Psoas muscle (tissue), 8 donors: ENCODE measurements at regions of chr6 and their contacts with region 1.

Region 1: DNA sequence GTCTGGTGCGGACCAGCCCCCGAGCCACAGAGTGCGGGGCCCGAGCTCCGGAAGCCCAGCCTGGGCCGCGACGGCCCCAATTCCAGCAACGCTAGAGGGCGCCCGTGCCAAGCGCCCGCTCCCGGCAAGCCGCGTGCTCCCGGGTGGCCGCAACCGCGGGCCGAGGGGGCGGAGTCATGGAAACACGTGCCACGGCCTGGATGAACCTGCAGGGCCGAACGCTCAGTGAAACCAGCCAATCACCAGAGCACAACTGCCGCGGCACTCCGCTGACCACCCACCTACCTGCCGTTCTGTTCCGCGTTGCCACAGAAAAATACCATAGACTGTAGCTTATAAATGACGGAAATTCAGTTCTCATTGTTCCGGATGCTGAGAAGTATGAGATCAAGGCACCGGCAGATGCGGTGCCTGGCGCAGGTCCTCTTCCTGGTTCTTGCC is 85.7 kb upstream of the FOXC1 start:
- DNase-seq: peak; percentile 79 to 86
- ATAC-seq: peak; percentile 71 to 80 (median 74)
- H3K4me3 ChIP-seq: peak overlapping the region; percentile 44
- H3K27ac ChIP-seq: no peak overlapping the region
- H3K4me1 ChIP-seq: peaks cover 20% of the 10 kb centered on the region
- H3K27me3 ChIP-seq: peaks cover 0 to 11% (median 9%) of the 10 kb centered on the region in 3 donors
- CTCF ChIP-seq: peak; percentile 69

Region 2: GRCh38 chr6:1554476-1555310 is 30.6 kb after region 1 on chr6:
- intact Hi-C with region 1: loop called in 1 of 2 experiments (anchors 2 kb)
- DNase-seq: peak; percentile 84 to 90
- ATAC-seq: peak; percentile 80 to 90 (median 84)
- H3K4me3 ChIP-seq: peak overlapping the region; percentile 82
- H3K27ac ChIP-seq: peak overlapping the region; percentile 71
- H3K4me1 ChIP-seq: no peaks in the 10 kb centered on the region
- H3K27me3 ChIP-seq: peaks cover 0 to 5% (median 0%) of the 10 kb centered on the region in 3 donors
- CTCF ChIP-seq: peak; percentile 81